ENCODE measurements at regions of chr1 and their contacts with region 1.

Region 1: DNA sequence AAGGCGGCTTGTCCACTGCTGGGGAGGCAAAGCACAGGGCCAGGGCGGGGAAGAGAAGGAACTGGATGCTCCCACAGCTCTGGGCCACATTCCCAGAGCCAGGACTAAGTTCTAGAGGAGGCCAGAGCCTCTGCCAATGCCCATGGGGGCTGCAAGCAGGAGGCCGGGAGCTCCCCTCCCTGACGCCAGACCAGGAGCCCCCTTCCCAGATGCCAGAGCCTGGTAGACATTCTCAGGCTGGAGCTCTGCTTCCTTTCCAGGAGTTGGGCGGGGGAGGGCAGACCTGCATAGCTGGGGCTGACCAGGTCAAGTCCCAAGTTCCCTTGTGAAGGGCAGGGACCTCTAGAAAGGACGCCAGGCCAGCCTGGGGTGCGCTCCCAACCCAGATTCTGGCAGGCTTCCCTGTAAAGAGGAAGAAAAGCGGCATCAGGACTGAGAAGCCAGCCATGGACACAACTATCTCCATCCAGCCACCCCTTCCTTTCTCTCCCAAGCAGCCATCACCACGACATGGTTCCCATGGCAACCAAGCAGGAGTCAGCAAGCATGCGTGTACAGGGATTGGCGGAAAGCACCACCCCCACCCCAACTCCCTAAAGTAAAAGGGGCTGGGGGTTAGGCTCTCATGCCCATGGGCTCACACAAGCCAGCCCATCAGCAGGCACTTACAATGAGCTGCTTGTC is 13.4 kb downstream of the KIF21B start:
- DNase-seq: no peak
- H3K4me3 ChIP-seq: no peak overlapping the region
- H3K27ac ChIP-seq: no peak overlapping the region
- H3K4me1 ChIP-seq: peaks cover 19% of the 10 kb centered on the region
- H3K27me3 ChIP-seq: no peaks in the 10 kb centered on the region
- CTCF ChIP-seq: no peak
- POLR2A ChIP-seq: no peak

Region 2: DNA sequence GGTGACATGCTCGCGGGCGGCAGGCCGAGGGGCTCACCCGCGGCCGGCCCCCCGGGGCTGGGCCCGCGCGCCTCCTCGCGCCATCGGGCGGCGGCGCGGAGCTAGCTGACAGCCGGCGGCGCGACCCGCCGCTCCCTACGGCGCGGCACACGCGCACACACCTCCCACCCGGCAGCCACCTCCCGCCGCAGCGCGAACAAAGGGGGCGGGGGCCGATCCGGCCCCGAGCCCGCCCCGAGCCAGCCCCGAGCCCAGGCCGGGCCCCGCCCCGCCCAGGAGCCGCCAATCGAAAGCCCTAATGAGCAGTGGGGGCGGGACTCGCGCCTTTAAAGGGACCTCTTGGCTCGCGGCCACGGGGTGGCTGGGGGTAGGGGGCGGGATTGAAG is 13.4 kb after region 1 on chr1 and contains the start of gene KIF21B:
- CTCF ChIA-PET with region 1: interaction called, 66 read pairs
- POLR2A ChIA-PET with region 1: no interaction called
- dilution Hi-C with region 1: no loop called
- intact Hi-C with region 1: no loop called
- DNase-seq: peak; percentile 75
- H3K4me3 ChIP-seq: peak within 1 kb of the TSS; percentile 11 to 49 (median 13)
- H3K27ac ChIP-seq: no peak within 1 kb of the TSS
- H3K4me1 ChIP-seq: peaks cover 37% of the 10 kb centered on the region
- H3K27me3 ChIP-seq: no peaks in the 10 kb centered on the region
- CTCF ChIP-seq: no peak
- POLR2A ChIP-seq: no peak
- total RNA-seq, gene KIF21B: 4.4 and 4.7 TPM in 2 replicates

Region 3: DNA sequence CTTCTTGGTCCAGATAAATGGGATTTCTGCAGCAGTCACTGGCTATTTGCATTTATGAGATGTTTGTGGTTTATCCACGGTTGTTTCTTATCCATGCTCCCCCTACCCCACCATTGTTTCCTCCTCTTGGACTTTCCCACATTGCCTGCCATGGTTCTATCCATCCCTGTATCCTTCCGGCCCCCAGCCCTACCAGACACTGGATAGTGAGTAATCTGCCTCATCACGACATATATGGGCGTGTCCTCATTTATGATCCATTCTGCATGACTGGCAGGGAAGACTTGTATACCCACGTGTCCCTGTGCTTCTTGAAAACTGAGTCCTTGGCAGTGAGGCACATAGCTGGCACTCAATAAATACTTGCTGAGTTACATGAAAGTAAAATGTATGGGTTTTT is 62.1 kb after region 1 on chr1:
- CTCF ChIA-PET with region 1: no interaction called
- POLR2A ChIA-PET with region 1: no interaction called
- dilution Hi-C with region 1: no loop called
- intact Hi-C with region 1: no loop called
- DNase-seq: no peak
- H3K4me3 ChIP-seq: no peak overlapping the region
- H3K27ac ChIP-seq: no peak overlapping the region
- H3K4me1 ChIP-seq: no peaks in the 10 kb centered on the region
- H3K27me3 ChIP-seq: peaks cover 11% of the 10 kb centered on the region in 2 experiments
- CTCF ChIP-seq: no peak
- POLR2A ChIP-seq: no peak

Region 4: DNA sequence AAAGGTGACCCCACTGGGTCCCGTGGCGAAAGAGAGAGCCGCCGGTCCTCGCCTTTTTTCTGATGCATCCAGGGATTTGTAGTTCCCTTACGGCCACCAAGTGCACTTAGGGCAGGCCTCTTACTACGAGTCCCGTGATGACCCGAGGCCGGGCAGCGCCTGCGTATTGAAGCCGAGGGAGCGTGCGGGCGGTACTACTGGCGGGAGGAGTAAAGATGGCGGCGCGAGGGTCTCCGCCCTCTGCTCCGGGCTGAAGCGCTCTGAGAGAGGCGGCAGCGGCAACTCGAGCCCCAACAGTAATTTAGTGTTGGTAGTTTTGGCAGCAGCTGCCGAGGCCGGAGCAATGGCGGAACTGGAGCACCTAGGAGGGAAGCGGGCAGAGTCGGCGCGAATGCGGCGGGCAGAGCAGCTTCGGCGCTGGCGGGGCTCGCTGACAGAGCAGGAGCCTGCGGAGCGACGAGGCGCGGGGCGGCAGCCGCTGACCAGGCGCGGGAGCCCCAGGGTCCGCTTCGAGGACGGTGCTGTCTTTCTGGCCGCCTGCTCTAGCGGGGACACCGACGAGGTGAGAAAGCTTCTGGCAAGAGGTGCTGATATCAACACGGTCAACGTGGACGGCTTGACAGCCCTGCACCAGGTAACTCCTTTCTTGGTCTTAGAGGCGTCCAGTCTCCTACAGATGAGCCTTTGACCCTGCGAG is 1338.6 kb after region 1 on chr1 and contains the start of gene PPP1R12B:
- CTCF ChIA-PET with region 1: no interaction called
- POLR2A ChIA-PET with region 1: no interaction called
- dilution Hi-C with region 1: no loop called
- intact Hi-C with region 1: no loop called
- DNase-seq: peak; percentile 99
- H3K4me3 ChIP-seq: peak within 1 kb of the TSS; percentile 44 to 75 (median 55)
- H3K27ac ChIP-seq: peak within 1 kb of the TSS; percentile 52
- H3K4me1 ChIP-seq: peaks cover 7% of the 10 kb centered on the region
- H3K27me3 ChIP-seq: no peaks in the 10 kb centered on the region
- CTCF ChIP-seq: no peak
- POLR2A ChIP-seq: peak; percentile 71
- total RNA-seq, gene PPP1R12B: 11.5 and 11.6 TPM in 2 replicates